GM23248 (cell line): ENCODE measurements at regions of chr12 and their contacts with region 1.

Region 1: DNA sequence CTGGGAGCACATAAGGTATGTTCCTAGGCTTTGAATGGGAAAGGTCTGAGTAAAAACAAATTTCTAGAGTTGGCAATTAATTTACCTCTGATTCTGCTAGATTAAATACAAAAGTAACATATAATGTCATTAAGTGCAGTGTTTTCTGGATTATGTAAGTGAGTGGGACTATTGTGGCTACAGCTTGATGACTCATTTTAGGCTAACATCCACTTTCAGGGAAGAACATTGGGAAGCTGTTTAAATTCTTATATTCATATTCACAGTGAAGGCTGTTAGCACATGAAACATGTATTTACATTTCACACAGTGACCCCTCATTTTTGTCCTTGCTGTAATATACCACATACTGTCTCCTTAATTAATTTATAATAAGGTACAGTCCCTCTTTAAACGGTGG is 13.2 kb upstream of the BMAL2 start:
- DNase-seq: peak; percentile 85
- H3K4me3 ChIP-seq: no peak overlapping the region
- H3K27ac ChIP-seq: peak overlapping the region; percentile 54
- H3K4me1 ChIP-seq: peaks cover 18% of the 10 kb centered on the region
- H3K27me3 ChIP-seq: no peaks in the 10 kb centered on the region

Region 2: DNA sequence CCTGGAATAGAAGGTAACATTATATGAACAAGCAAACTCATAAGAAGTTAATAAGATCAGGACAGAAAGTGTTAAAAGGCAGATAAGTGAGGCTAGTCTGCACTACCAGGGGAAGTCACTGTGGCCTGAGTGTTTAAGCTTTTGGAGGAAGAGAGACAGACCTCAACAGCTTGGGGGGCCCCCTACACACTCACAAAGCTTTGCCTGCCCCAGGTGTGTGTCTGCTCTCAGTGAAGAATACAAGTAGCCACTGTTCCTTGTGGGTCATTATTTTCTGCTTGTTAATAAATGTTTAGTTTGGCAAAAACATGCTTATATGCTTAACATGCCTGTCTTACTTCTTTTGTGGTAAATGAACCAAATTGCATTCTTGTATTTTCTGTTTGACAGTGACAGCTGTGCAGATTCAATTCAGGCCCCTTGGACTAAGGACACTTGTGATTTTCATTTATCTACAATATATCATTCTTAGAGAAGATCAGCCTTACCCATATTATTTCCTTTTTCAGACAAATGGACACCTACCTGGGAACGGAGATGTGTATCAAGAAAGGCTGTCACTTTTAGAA is 186.3 kb before region 1 on chr12:
- in situ Hi-C with region 1: loop called (anchors 10 kb)
- DNase-seq: no peak
- H3K4me3 ChIP-seq: no peak overlapping the region
- H3K27ac ChIP-seq: no peak overlapping the region
- H3K4me1 ChIP-seq: no peaks in the 10 kb centered on the region
- H3K27me3 ChIP-seq: no peaks in the 10 kb centered on the region